ENCODE measurements at regions of chr14 and their contacts with region 1.

Region 1: GRCh38 chr14:71753126-71753830 is 179.0 kb upstream of the RGS6 start:
- DNase-seq: peak; percentile 47 to 76 (median 57)
- H3K4me3 ChIP-seq: no peak overlapping the region
- H3K4me3 Mint-ChIP-seq: peak overlapping the region in 1 of 7 donors; percentile 9
- H3K27ac ChIP-seq: no peak overlapping the region
- H3K27ac Mint-ChIP-seq: no peak overlapping the region
- H3K4me1 ChIP-seq: peaks cover 4% of the 10 kb centered on the region
- H3K4me1 Mint-ChIP-seq: peaks cover 0 to 6% (median 0%) of the 10 kb centered on the region in 3 donors
- H3K27me3 ChIP-seq: no peaks in the 10 kb centered on the region
- H3K27me3 Mint-ChIP-seq: peaks cover 0 to 3% of the 10 kb centered on the region in 2 donors

Region 2: DNA sequence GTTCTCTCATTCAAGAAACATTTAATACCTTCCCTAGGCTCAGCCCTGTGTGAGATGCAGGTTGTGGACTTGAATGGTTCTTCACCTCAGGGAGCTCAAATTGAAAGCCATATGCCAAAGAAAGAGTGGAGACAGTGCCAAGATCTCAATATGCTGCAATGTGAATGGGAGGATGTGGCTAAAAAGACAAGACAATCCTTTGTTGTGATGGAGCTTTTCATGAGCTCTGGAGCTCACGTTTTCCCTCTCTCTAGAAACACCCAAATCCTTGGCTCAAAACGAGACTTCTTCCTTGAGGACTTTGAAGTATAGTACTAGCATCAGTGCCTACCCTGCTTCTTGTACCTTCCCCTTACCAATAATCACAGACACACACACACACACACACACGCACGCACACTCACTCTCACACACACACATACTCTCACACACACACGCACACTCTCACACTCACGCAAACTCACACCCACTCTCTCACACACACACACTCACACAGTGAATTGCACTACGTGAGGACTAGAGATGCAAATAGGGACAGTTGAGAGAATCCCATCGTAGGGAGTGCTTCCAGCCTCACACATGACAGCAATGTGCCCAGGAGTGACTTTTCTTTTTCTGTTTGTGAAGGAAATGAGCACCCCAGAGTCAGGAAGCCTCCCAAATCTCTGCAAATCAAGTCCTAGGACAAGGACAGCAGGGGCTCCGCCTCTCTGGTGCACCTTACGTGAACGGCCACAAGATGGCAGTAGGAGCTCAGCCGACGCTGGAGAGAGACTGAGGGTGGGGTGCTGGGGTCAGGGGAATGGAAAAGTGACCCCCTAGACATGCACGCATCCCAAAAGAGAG is 614.6 kb before region 1 on chr14:
- CTCF ChIA-PET with region 1: interaction called, 133 read pairs
- POLR2A ChIA-PET with region 1: no interaction called
- DNase-seq: peak; percentile 31 to 68 (median 47)
- H3K4me3 ChIP-seq: no peak overlapping the region
- H3K4me3 Mint-ChIP-seq: no peak overlapping the region
- H3K27ac ChIP-seq: no peak overlapping the region
- H3K27ac Mint-ChIP-seq: peak overlapping the region in 4 of 8 donors; percentile 13 to 90 (median 34)
- H3K4me1 ChIP-seq: peaks cover 18% of the 10 kb centered on the region
- H3K4me1 Mint-ChIP-seq: peaks cover 18 to 27% (median 24%) of the 10 kb centered on the region in 3 donors
- H3K27me3 ChIP-seq: no peaks in the 10 kb centered on the region
- H3K27me3 Mint-ChIP-seq: peaks cover 0 to 1% of the 10 kb centered on the region in 2 donors

Region 3: GRCh38 chr14:71155743-71156142 is 597.5 kb before region 1 on chr14:
- CTCF ChIA-PET with region 1: interaction called, 10 read pairs
- POLR2A ChIA-PET with region 1: no interaction called
- DNase-seq: no peak
- H3K4me3 ChIP-seq: no peak overlapping the region
- H3K4me3 Mint-ChIP-seq: no peak overlapping the region
- H3K27ac ChIP-seq: no peak overlapping the region
- H3K27ac Mint-ChIP-seq: peak overlapping the region in 1 of 8 donors; percentile 47
- H3K4me1 ChIP-seq: no peaks in the 10 kb centered on the region
- H3K4me1 Mint-ChIP-seq: no peaks in the 10 kb centered on the region
- H3K27me3 ChIP-seq: no peaks in the 10 kb centered on the region
- H3K27me3 Mint-ChIP-seq: peaks cover 0 to 3% of the 10 kb centered on the region in 2 donors

Region 4: DNA sequence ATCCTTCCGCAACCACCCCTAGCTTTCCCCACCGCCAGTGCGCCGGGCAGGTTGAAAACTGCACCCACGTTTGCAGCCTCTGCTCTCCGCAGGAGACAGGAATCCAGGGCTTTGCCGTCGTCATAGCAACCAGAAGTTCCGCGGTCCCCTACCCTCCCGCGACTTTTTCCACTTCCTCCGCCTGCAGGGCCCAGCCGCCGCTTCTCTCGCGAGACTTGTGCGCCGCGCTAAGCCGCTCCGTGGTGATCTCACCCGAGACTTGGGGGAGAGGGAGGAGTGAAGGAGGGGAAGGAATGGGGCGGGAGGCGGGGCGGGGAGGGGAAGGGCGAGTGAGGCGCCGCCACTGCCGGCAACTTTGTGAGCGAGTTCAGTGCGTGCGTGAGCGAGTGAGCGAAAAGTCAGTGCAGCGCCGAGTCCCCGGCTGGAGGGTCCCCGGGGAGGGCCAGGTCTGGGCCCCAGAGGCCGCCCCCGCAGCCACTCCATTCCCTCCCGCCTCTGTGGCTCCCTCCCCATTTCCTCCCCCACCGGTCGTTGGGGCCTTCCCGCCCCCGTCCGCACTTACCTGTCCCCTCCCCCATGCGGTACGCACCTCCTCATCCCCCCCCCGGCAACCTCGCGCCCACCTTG is 433.1 kb before region 1 on chr14:
- CTCF ChIA-PET with region 1: interaction called, 14 read pairs
- POLR2A ChIA-PET with region 1: no interaction called
- DNase-seq: peak; percentile 98 to 100 (median 98)
- H3K4me3 ChIP-seq: peak within 1 kb of the TSS; percentile 80
- H3K4me3 Mint-ChIP-seq: peak within 1 kb of the TSS; percentile 89 to 97 (median 94)
- H3K27ac ChIP-seq: peak within 1 kb of the TSS; percentile 84
- H3K27ac Mint-ChIP-seq: peak within 1 kb of the TSS; percentile 94 to 99 (median 98)
- H3K4me1 ChIP-seq: peaks cover 35% of the 10 kb centered on the region
- H3K4me1 Mint-ChIP-seq: peaks cover 42 to 50% (median 48%) of the 10 kb centered on the region in 3 donors
- H3K27me3 ChIP-seq: no peaks in the 10 kb centered on the region
- H3K27me3 Mint-ChIP-seq: peaks cover 0 to 6% of the 10 kb centered on the region in 2 donors

Region 5: DNA sequence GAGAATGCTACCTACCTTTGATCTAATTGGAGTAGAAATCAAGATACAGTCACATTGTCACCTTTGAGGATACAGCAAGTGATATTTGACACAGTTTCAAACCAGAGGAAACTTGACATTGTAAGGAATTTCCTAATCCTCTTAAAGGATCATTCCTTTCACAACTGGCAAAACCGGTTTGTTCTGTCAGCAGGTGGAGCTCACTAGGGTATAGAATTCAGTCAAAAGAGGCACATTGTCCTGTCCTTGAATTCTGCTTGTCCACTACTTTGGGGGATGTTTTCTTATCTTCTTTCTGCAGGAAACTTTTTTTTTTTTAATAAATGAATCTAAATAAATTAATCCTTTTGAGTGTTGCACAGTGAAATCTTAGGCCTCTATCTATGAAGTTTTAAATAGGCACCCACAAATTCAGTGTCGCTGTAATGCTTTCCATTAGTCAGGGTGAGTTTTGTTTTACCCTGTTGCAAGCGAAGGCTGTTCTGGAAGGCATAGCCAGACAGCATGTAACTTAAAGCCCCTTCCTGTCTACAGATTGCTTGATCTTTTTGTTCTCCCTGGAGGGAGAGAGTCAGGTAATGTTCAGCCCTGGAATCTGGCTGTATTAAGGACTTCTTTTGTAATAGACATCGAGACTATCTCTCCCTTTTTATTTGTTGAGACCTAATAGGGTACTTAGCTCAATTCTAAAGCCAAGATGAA is 106.0 kb before region 1 on chr14:
- CTCF ChIA-PET with region 1: no interaction called
- POLR2A ChIA-PET with region 1: no interaction called
- DNase-seq: no peak
- H3K4me3 ChIP-seq: no peak overlapping the region
- H3K4me3 Mint-ChIP-seq: no peak overlapping the region
- H3K27ac ChIP-seq: no peak overlapping the region
- H3K27ac Mint-ChIP-seq: peak overlapping the region in 1 of 8 donors; percentile 3
- H3K4me1 ChIP-seq: no peaks in the 10 kb centered on the region
- H3K4me1 Mint-ChIP-seq: peaks cover 0 to 4% (median 0%) of the 10 kb centered on the region in 3 donors
- H3K27me3 ChIP-seq: no peaks in the 10 kb centered on the region
- H3K27me3 Mint-ChIP-seq: no peaks in the 10 kb centered on the region

Region 6: GRCh38 chr14:71742485-71742884 is 10.8 kb before region 1 on chr14:
- CTCF ChIA-PET with region 1: interaction called, 11 read pairs
- POLR2A ChIA-PET with region 1: no interaction called
- DNase-seq: no peak
- H3K4me3 ChIP-seq: no peak overlapping the region
- H3K4me3 Mint-ChIP-seq: no peak overlapping the region
- H3K27ac ChIP-seq: no peak overlapping the region
- H3K27ac Mint-ChIP-seq: no peak overlapping the region
- H3K4me1 ChIP-seq: no peaks in the 10 kb centered on the region
- H3K4me1 Mint-ChIP-seq: no peaks in the 10 kb centered on the region
- H3K27me3 ChIP-seq: no peaks in the 10 kb centered on the region
- H3K27me3 Mint-ChIP-seq: peaks cover 0 to 6% of the 10 kb centered on the region in 2 donors

Region 7: GRCh38 chr14:71799841-71800240 is 46.6 kb after region 1 on chr14:
- CTCF ChIA-PET with region 1: no interaction called
- POLR2A ChIA-PET with region 1: no interaction called
- DNase-seq: no peak
- H3K4me3 ChIP-seq: no peak overlapping the region
- H3K4me3 Mint-ChIP-seq: no peak overlapping the region
- H3K27ac ChIP-seq: no peak overlapping the region
- H3K27ac Mint-ChIP-seq: no peak overlapping the region
- H3K4me1 ChIP-seq: no peaks in the 10 kb centered on the region
- H3K4me1 Mint-ChIP-seq: no peaks in the 10 kb centered on the region
- H3K27me3 ChIP-seq: no peaks in the 10 kb centered on the region
- H3K27me3 Mint-ChIP-seq: peaks cover 19 to 48% of the 10 kb centered on the region in 2 donors

Region 8: DNA sequence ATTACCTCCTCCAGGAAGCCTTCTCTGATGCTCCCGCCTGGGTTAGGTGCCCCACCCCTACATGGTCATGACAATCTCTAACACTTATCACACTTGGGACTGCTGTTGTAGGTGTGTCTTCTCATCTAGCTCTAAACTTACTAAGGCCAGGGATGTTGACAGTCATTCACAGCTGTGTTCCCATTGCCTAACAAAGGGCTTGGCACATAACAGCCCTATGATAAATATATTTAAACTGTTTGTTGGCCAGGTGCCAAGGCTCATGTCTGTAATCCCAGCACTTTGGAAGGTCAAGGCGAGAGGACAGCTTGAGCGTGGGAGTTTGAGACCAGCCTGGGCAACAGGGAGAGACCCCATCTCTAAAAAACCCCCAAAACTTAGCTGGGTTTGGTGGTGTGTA is 80.2 kb after region 1 on chr14:
- CTCF ChIA-PET with region 1: no interaction called
- POLR2A ChIA-PET with region 1: no interaction called
- DNase-seq: no peak
- H3K4me3 ChIP-seq: no peak overlapping the region
- H3K4me3 Mint-ChIP-seq: no peak overlapping the region
- H3K27ac ChIP-seq: no peak overlapping the region
- H3K27ac Mint-ChIP-seq: no peak overlapping the region
- H3K4me1 ChIP-seq: no peaks in the 10 kb centered on the region
- H3K4me1 Mint-ChIP-seq: no peaks in the 10 kb centered on the region
- H3K27me3 ChIP-seq: no peaks in the 10 kb centered on the region
- H3K27me3 Mint-ChIP-seq: peaks cover 7 to 16% of the 10 kb centered on the region in 2 donors

Region 9: DNA sequence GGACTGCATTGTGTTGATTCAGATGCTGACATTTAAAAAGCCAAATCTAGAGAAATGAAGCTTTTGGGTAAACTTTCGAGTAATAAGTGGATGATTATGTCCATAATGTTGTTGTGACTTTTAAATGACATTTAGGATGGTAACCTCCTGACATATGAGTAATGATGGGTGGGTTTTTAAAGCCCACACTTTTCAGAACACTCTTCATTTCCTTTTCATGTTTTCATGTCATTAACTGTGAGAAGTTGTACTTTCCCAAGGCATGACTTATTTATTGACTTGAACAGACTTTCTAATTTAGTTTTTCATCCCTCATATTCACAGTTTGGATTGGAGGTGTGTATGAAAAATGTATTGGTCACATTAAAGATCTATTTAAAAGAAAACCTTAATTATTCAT is 214.4 kb after region 1 on chr14:
- CTCF ChIA-PET with region 1: no interaction called
- POLR2A ChIA-PET with region 1: no interaction called
- DNase-seq: no peak
- H3K4me3 ChIP-seq: no peak overlapping the region
- H3K4me3 Mint-ChIP-seq: no peak overlapping the region
- H3K27ac ChIP-seq: no peak overlapping the region
- H3K27ac Mint-ChIP-seq: peak overlapping the region in 1 of 8 donors; percentile 40
- H3K4me1 ChIP-seq: no peaks in the 10 kb centered on the region
- H3K4me1 Mint-ChIP-seq: no peaks in the 10 kb centered on the region
- H3K27me3 ChIP-seq: no peaks in the 10 kb centered on the region
- H3K27me3 Mint-ChIP-seq: peaks cover 1 to 12% of the 10 kb centered on the region in 2 donors